Right cardiac atrium (tissue), 5 donors: ENCODE measurements at regions of chr11 and their contacts with region 1.

Region 1: GRCh38 chr11:81787584-81788049 is 946.0 kb downstream of the FAM181B start:
- DNase-seq: no peak
- ATAC-seq: no peak
- H3K4me3 ChIP-seq: no peak overlapping the region
- H3K27ac ChIP-seq: no peak overlapping the region
- H3K4me1 ChIP-seq: no peaks in the 10 kb centered on the region
- H3K27me3 ChIP-seq: no peaks in the 10 kb centered on the region

Region 2: GRCh38 chr11:81634483-81634882 is 153.1 kb before region 1 on chr11:
- intact Hi-C with region 1: no loop called
- DNase-seq: no peak
- ATAC-seq: no peak
- H3K4me3 ChIP-seq: no peak overlapping the region
- H3K27ac ChIP-seq: no peak overlapping the region
- H3K4me1 ChIP-seq: no peaks in the 10 kb centered on the region
- H3K27me3 ChIP-seq: no peaks in the 10 kb centered on the region

Region 3: DNA sequence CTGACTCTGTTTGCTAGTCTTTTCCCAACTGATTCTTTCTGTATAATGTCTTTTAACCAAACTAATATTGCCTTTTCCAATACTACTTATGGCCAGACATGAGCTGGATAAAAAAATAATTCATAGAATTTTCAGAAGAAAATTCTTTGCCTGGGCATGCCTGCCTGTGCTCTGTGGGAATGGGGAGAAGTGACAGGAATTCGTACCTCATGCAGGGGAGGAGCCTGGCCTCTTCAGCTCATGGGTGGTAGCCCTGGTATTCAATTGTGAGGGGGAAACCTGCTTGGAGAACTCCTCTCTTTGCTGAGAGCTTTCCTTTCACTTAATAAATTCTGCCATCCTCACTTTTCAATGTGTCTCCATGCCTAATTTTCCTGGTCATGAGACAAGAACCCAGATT is 17.2 kb after region 1 on chr11:
- intact Hi-C with region 1: loop called in 2 of 4 experiments (anchors 2 kb)
- DNase-seq: no peak
- ATAC-seq: no peak
- H3K4me3 ChIP-seq: no peak overlapping the region
- H3K27ac ChIP-seq: no peak overlapping the region
- H3K4me1 ChIP-seq: no peaks in the 10 kb centered on the region
- H3K27me3 ChIP-seq: no peaks in the 10 kb centered on the region